Activated naive CD4-positive, alpha-beta T cell treated with anti-CD3 and anti-CD28 coated beads, Interleukin-2, amount 10 ng/mL, durations not matched to agents 7 days and 5 days (primary cell): ENCODE measurements at regions of chr10 and their contacts with region 1.

Region 1: GRCh38 chr10:30374353-30374752 is 25.3 kb upstream of the MTPAP start:
- DNase-seq: no peak
- H3K4me3 Mint-ChIP-seq: no peak overlapping the region
- H3K27ac Mint-ChIP-seq: no peak overlapping the region
- H3K4me1 Mint-ChIP-seq: peaks cover 36% of the 10 kb centered on the region
- H3K27me3 Mint-ChIP-seq: peaks cover 29% of the 10 kb centered on the region

Region 2: GRCh38 chr10:30384701-30385201 is 10.4 kb after region 1 on chr10:
- CTCF ChIA-PET with region 1: interaction called, 20 read pairs
- DNase-seq: peak; percentile 35
- H3K4me3 Mint-ChIP-seq: no peak overlapping the region
- H3K27ac Mint-ChIP-seq: no peak overlapping the region
- H3K4me1 Mint-ChIP-seq: no peaks in the 10 kb centered on the region
- H3K27me3 Mint-ChIP-seq: peaks cover 50% of the 10 kb centered on the region

Region 3: GRCh38 chr10:30510169-30510930 is 136.0 kb after region 1 on chr10:
- CTCF ChIA-PET with region 1: no interaction called
- DNase-seq: no peak
- H3K4me3 Mint-ChIP-seq: no peak overlapping the region
- H3K27ac Mint-ChIP-seq: no peak overlapping the region
- H3K4me1 Mint-ChIP-seq: peaks cover 19% of the 10 kb centered on the region
- H3K27me3 Mint-ChIP-seq: peaks cover 17% of the 10 kb centered on the region